Activated CD8-positive, alpha-beta T cell treated with anti-CD3 and anti-CD28 coated beads, Interleukin-2, amount 10 ng/mL, durations not matched to agents 7 days and 5 days (primary cell): ENCODE measurements at regions of chr12 and their contacts with region 1.

Region 1: DNA sequence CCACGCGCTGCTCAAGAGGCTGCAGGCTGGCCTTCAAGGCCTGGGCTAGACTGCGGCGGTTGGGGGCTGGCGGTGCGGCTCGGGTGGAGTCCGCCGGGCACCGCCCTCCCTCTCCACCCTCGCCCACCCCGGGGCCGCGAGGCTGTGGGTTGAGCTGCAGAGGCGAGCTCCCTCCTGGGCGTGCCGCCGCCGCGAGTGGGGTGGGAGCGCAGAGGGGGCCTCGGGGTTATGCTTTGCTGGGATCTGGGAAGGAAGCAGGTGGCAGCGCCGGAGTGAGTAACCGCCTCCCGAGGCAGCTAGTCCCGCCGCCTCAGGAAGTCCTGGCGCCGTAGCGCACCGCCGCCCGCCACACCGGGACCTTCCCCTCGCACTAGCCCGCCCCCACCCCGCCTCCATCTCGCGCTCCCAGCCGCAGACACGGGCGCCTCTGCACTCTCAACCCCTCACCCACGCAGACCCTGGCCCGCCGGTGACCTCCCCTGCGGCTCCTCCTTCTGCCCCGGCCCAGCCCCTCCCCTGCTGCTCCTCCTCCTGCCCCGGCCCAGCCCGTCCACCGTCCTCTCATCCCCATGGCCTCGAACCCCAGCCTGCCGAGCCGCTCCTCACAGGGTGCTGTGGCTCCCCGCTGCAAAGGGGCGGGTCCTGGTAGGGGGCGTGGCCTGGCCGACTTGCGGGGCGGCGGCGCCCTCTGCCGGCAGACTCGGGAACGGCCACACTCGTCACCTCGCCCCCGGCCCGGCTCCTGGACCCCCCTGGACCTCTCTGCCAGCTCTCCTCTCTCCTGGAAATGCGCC is 16.6 kb downstream of the TAMALIN start:
- DNase-seq: peak; percentile 95
- ATAC-seq: peak; percentile 61
- H3K4me3 Mint-ChIP-seq: peak overlapping the region; percentile 94
- H3K27ac Mint-ChIP-seq: peak overlapping the region; percentile 99
- H3K4me1 Mint-ChIP-seq: peaks cover 59% of the 10 kb centered on the region
- H3K27me3 Mint-ChIP-seq: peaks cover 2% of the 10 kb centered on the region

Region 2: DNA sequence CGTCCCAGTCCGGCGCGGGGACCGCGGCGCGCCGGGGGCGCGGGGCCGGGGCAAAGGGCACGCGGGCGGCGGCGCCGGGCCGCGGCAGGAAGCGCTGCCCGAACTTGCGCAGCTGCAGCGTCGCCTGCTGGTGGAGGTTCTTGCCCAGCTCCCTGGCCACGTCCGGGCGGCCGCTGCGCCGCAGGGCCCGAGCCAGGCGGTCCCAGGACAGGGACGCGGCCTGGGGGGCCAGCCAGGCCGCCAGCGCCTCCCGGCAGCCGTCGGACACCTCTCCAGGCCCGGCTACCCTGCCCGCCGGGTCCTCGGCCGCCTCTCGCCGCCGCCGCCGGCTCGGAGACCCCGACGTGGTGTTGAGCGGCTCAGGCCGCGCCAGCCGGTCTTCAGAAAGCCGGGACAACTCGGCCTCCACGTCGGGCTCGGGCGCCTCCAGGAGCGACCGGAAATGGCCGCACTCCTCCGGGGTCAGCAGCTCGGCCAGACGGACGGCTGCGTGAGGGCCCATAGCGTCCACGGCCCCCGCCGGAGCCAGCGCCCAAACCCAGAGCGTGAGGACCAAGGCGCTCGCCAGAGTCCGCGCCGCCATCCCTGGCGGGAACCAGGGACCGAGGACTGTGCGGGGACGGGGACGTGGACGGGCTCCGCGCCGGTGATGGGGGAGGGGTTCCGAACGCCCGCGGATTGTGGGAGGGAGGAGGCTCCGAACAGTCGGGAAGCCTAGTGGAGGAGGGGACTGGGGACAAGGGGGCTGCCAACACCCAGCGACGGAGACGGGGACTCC is 208.9 kb before region 1 on chr12:
- CTCF ChIA-PET with region 1: no interaction called
- POLR2A ChIA-PET with region 1: no interaction called
- DNase-seq: peak; percentile 76
- ATAC-seq: peak; percentile 93
- H3K4me3 Mint-ChIP-seq: peak overlapping the region; percentile 64
- H3K27ac Mint-ChIP-seq: no peak overlapping the region
- H3K4me1 Mint-ChIP-seq: peaks cover 9% of the 10 kb centered on the region
- H3K27me3 Mint-ChIP-seq: peaks cover 13% of the 10 kb centered on the region

Region 3: GRCh38 chr12:51886021-51886322 is 137.4 kb before region 1 on chr12:
- CTCF ChIA-PET with region 1: interaction called, 14 read pairs
- POLR2A ChIA-PET with region 1: interaction called, 3 read pairs
- DNase-seq: peak; percentile 75
- ATAC-seq: peak; percentile 91
- H3K4me3 Mint-ChIP-seq: peak overlapping the region; percentile 28
- H3K27ac Mint-ChIP-seq: peak overlapping the region; percentile 93
- H3K4me1 Mint-ChIP-seq: peaks cover 17% of the 10 kb centered on the region
- H3K27me3 Mint-ChIP-seq: peaks cover 2% of the 10 kb centered on the region

Region 4: GRCh38 chr12:51951199-51951842 is 72.1 kb before region 1 on chr12 and contains the start of gene ACVR1B:
- CTCF ChIA-PET with region 1: interaction called, 10 read pairs
- POLR2A ChIA-PET with region 1: no interaction called
- DNase-seq: peak; percentile 90
- ATAC-seq: peak; percentile 99
- H3K4me3 Mint-ChIP-seq: peak within 1 kb of the TSS; percentile 86
- H3K27ac Mint-ChIP-seq: peak within 1 kb of the TSS; percentile 62
- H3K4me1 Mint-ChIP-seq: peaks cover 27% of the 10 kb centered on the region
- H3K27me3 Mint-ChIP-seq: peaks cover 28% of the 10 kb centered on the region
- total RNA-seq, gene ACVR1B: 7.8 to 8.8 TPM

Region 5: GRCh38 chr12:51980051-51980808 is 43.1 kb before region 1 on chr12:
- CTCF ChIA-PET with region 1: interaction called, 472 read pairs
- POLR2A ChIA-PET with region 1: interaction called, 3 read pairs
- DNase-seq: peak; percentile 79
- ATAC-seq: peak; percentile 96
- H3K4me3 Mint-ChIP-seq: no peak overlapping the region
- H3K27ac Mint-ChIP-seq: peak overlapping the region; percentile 51
- H3K4me1 Mint-ChIP-seq: peaks cover 38% of the 10 kb centered on the region
- H3K27me3 Mint-ChIP-seq: no peaks in the 10 kb centered on the region

Region 6: GRCh38 chr12:52050761-52051541 is 27.6 kb after region 1 on chr12 and contains the start of gene NR4A1:
- CTCF ChIA-PET with region 1: interaction called, 290 read pairs
- POLR2A ChIA-PET with region 1: interaction called, 12 read pairs
- DNase-seq: peak; percentile 98
- ATAC-seq: peak; percentile 85
- H3K4me3 Mint-ChIP-seq: peak within 1 kb of the TSS; percentile 86
- H3K27ac Mint-ChIP-seq: peak within 1 kb of the TSS; percentile 98
- H3K4me1 Mint-ChIP-seq: peaks cover 49% of the 10 kb centered on the region
- H3K27me3 Mint-ChIP-seq: no peaks in the 10 kb centered on the region
- total RNA-seq, gene NR4A1: 4.3 to 5.6 TPM

Region 7: GRCh38 chr12:52093346-52093745 is 70.0 kb after region 1 on chr12:
- CTCF ChIA-PET with region 1: interaction called, 486 read pairs
- POLR2A ChIA-PET with region 1: no interaction called
- DNase-seq: no peak
- ATAC-seq: no peak
- H3K4me3 Mint-ChIP-seq: no peak overlapping the region
- H3K27ac Mint-ChIP-seq: no peak overlapping the region
- H3K4me1 Mint-ChIP-seq: peaks cover 3% of the 10 kb centered on the region
- H3K27me3 Mint-ChIP-seq: peaks cover 41% of the 10 kb centered on the region